Adrenal gland (tissue), 19 donors: ENCODE measurements at regions of chr5 and their contacts with region 1.

Region 1: GRCh38 chr5:112929326-112930081 is 7.5 kb upstream of the REEP5 start:
- DNase-seq: no peak
- H3K4me3 ChIP-seq: no peak overlapping the region
- H3K27ac ChIP-seq: no peak overlapping the region
- H3K4me1 ChIP-seq: peaks cover 0 to 10% of the 10 kb centered on the region in 2 donors
- H3K27me3 ChIP-seq: no peaks in the 10 kb centered on the region
- CTCF ChIP-seq: no peak
- POLR2A ChIP-seq: no peak

Region 2: GRCh38 chr5:112848116-112848811 is 81.2 kb before region 1 on chr5:
- intact Hi-C with region 1: no loop called
- DNase-seq: peak in 4 of 7 donors; percentile 23 to 30 (median 30)
- H3K4me3 ChIP-seq: no peak overlapping the region
- H3K27ac ChIP-seq: peak overlapping the region in 3 of 5 donors; percentile 4 to 54 (median 10)
- H3K4me1 ChIP-seq: peaks cover 0 to 4% of the 10 kb centered on the region in 2 donors
- H3K27me3 ChIP-seq: no peaks in the 10 kb centered on the region
- CTCF ChIP-seq: peak; percentile 42 to 74 (median 62)
- POLR2A ChIP-seq: peak in 1 of 2 donors; percentile 13

Region 3: GRCh38 chr5:112968411-112969106 is 39.1 kb after region 1 on chr5:
- intact Hi-C with region 1: loop called in 1 of 2 experiments (anchors 5 kb)
- DNase-seq: no peak
- H3K4me3 ChIP-seq: no peak overlapping the region
- H3K27ac ChIP-seq: no peak overlapping the region
- H3K4me1 ChIP-seq: peaks cover 7 to 13% of the 10 kb centered on the region in 2 donors
- H3K27me3 ChIP-seq: no peaks in the 10 kb centered on the region
- CTCF ChIP-seq: no peak
- POLR2A ChIP-seq: no peak